Spleen (tissue), 13 donors: ENCODE measurements at regions of chr1 and their contacts with region 1.

Region 1: DNA sequence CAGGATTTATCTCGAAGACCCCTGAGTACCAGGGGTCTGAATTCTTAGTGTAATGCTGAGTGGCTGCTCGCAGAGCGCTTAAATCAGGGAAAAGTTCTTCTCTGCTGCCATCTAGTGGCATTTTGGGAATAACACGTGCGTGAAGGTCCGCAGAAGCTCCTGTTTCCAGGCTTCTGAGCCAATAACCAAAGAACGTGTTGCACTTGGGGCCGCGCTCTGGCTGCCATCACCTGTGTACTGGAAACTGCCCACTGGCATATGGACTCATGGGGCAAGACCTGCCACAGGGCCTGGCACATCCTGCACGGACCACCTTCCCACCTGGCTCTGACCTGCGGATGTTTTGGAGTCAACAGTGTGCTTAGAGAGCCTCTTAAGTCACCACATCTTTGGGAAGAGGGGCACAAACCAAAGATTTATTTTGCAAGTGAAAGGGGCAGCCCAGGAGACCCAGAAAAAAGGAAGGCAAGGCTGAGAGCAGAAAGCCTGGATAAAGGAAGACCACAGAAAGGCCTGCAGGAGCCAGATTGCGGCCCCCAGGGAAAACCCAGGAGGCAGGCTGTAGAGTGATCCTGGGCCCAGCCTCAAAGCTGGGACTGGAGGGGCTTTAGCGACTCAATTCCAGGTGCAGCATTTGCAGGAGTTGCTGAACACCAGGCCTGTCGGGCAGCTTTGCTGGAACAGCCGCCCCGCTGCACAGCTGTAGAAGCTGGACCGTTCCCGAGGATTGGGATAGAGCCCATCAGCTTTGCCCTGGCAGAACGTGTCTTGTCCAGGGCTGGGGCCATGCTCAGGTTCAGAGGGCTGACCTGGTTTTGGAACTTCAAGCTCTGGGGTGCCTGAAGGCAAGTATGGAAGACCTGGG is 13.0 kb downstream of the CHIT1 start:
- DNase-seq: no peak
- H3K4me3 ChIP-seq: no peak overlapping the region
- H3K27ac ChIP-seq: no peak overlapping the region
- H3K4me1 ChIP-seq: peaks cover 0 to 36% (median 15%) of the 10 kb centered on the region in 6 donors
- H3K27me3 ChIP-seq: peaks cover 0 to 22% (median 5%) of the 10 kb centered on the region in 7 donors
- CTCF ChIP-seq: peak; percentile 49 to 93 (median 81)
- POLR2A ChIP-seq: no peak

Region 2: GRCh38 chr1:203039609-203040512 is 176.6 kb before region 1 on chr1:
- intact Hi-C with region 1: loop called (anchors 2 kb)
- DNase-seq: no peak
- H3K4me3 ChIP-seq: no peak overlapping the region
- H3K27ac ChIP-seq: peak overlapping the region in 1 of 8 donors; percentile 4
- H3K4me1 ChIP-seq: peaks cover 0 to 31% (median 15%) of the 10 kb centered on the region in 6 donors
- H3K27me3 ChIP-seq: peaks cover 0 to 26% (median 0%) of the 10 kb centered on the region in 7 donors
- CTCF ChIP-seq: peak in 5 of 11 experiments; percentile 4 to 49 (median 17)
- POLR2A ChIP-seq: no peak

Region 3: DNA sequence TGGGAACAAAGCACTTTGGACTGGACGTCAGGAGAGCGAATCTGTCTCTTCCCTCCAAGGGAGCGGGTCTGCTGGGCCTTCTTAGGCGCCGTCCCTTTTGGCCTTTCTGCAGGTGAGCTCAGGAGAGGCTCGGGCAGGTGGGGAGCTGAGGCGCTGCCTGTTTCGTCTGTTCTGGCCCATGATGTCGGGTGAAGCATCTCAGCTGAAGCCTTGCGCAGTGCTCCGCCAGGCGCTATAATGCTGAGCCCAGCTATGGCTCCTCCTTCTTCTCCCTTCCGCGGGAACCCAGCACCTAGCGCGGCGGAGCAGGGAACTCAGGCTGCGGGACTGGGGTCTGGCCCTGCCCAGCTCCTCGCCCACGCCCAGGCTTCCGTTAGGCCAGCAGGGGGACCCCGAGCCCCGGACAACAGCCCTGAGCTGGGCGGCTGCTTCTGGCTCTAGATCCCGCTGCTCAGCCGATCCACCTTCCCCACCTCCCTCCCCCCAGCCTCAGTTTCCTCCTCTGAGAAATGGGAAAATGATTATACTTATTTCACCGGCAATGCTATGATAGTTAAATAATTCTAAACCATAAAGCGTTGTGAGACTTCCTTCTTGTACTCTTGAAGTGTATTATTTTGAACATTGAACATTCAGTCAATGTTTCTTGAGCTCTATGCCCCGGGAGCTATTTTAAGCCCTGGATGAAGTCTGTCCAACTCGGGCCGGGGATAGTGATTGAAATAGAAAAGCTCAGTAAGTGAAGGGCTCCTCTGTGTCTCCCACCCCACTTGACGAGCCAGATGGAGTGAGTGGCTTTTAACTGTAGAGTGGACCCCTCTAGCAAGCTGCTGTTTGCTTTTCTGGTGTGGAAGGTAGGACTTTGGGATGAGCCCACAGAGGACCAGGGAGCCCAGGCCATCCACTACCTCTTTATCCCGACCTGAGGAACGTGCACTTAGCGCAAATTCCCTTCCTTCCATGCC is 98.6 kb before region 1 on chr1:
- intact Hi-C with region 1: loop called (anchors 5 kb)
- DNase-seq: peak; percentile 86
- H3K4me3 ChIP-seq: no peak overlapping the region
- H3K27ac ChIP-seq: peak overlapping the region in 1 of 8 donors; percentile 4
- H3K4me1 ChIP-seq: peaks cover 0 to 21% (median 2%) of the 10 kb centered on the region in 6 donors
- H3K27me3 ChIP-seq: peaks cover 0 to 74% (median 12%) of the 10 kb centered on the region in 7 donors
- CTCF ChIP-seq: peak in 9 of 11 experiments; percentile 50 to 80 (median 64)
- POLR2A ChIP-seq: no peak

Region 4: DNA sequence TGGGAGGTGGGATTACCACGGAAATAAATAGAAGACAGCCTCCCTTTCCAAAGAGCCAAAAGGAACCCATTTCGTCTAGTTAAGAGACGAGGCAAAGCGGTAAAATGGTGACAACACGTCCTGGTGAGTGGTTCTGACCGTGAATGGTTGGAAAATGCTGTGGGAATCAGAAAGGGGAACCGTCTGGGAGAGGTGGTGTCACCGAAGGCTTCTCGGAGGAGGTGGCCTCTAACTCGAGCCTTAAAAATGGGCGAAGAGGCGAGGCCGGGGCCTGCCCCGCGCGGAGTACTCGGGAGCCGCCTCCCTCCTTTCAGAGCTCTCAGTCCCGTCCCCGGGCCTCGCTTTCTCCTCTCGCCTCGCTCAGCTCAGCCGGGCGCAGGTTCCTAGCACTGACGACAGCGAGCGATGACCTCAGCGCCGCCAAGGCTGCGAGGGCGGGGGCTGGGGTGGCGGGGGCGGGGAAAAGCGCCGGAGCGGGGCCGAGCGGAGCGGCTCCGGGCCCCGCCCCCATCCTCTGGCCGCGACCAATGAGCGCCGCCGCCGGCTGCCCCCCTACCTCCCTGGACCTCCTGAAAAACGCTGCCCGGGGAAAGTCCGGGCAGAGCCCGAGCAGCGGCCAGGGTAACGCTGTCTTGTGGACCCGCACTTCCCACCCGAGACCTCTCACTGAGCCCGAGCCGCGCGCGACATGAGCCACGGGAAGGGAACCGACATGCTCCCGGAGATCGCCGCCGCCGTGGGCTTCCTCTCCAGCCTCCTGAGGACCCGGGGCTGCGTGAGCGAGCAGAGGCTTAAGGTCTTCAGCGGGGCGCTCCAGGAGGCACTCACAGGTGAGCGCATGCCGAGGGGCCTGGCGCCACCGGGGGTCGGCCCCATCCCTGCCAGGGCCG is 88.7 kb after region 1 on chr1 and contains the start of gene BTG2:
- intact Hi-C with region 1: no loop called
- DNase-seq: peak; percentile 98
- H3K4me3 ChIP-seq: peak within 1 kb of the TSS; percentile 63 to 100 (median 93)
- H3K27ac ChIP-seq: peak within 1 kb of the TSS; percentile 97 to 100 (median 99)
- H3K4me1 ChIP-seq: peaks cover 40 to 82% (median 77%) of the 10 kb centered on the region in 6 donors
- H3K27me3 ChIP-seq: no peaks in the 10 kb centered on the region
- CTCF ChIP-seq: peak in 3 of 11 experiments; percentile 6 to 36 (median 7)
- POLR2A ChIP-seq: peak; percentile 99 to 100 (median 99)
- total RNA-seq, gene BTG2: 104 to 186 (median 153) TPM

Region 5: GRCh38 chr1:203402629-203403337 is 186.3 kb after region 1 on chr1:
- intact Hi-C with region 1: no loop called
- DNase-seq: no peak
- H3K4me3 ChIP-seq: no peak overlapping the region
- H3K27ac ChIP-seq: peak overlapping the region in 7 of 8 donors; percentile 49 to 76 (median 65)
- H3K4me1 ChIP-seq: peaks cover 0 to 27% (median 2%) of the 10 kb centered on the region in 6 donors
- H3K27me3 ChIP-seq: peaks cover 0 to 8% (median 0%) of the 10 kb centered on the region in 7 donors
- CTCF ChIP-seq: no peak
- POLR2A ChIP-seq: no peak